ENCODE measurements at regions of chr10 and their contacts with region 1.

Region 1: DNA sequence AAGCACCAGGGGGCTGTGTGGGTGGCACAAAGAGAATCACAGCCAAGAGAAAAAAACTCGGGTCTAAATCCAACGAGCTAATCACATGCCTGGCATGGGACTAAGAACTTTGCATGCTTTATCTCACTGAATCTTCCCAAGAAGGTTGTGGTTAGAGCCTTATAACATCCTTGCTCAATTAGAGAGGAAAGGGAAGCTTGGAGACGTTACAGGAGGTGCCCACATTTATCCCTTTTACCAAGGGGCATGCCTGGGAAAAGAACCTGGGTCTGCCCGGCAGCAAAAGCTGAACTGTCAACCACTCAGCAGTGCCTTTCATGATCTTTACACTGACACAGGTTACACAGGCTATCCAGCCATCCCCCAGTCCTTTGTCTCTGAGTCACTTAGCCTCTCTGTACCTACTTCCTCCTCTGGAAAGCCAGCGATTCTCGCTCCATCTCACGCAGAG is 190.1 kb downstream of the PRPF18 start:
- DNase-seq: peak; percentile 17
- H3K4me3 Mint-ChIP-seq: no peak overlapping the region
- H3K27ac Mint-ChIP-seq: no peak overlapping the region
- H3K4me1 Mint-ChIP-seq: peaks cover 18% of the 10 kb centered on the region
- H3K27me3 Mint-ChIP-seq: no peaks in the 10 kb centered on the region
- CTCF ChIP-seq: no peak

Region 2: GRCh38 chr10:13613519-13613918 is 163.4 kb before region 1 on chr10:
- CTCF ChIA-PET with region 1: interaction called, 5 read pairs
- POLR2A ChIA-PET with region 1: no interaction called
- intact Hi-C with region 1: loop called (anchors 1 kb)
- DNase-seq: peak; percentile 8
- H3K4me3 Mint-ChIP-seq: no peak overlapping the region
- H3K27ac Mint-ChIP-seq: no peak overlapping the region
- H3K4me1 Mint-ChIP-seq: peaks cover 22% of the 10 kb centered on the region
- H3K27me3 Mint-ChIP-seq: no peaks in the 10 kb centered on the region
- CTCF ChIP-seq: peak; percentile 17

Measured in MCF 10A (cell line).